Panc1 (cell line): ENCODE measurements at regions of chr12 and their contacts with region 1.

Region 1: GRCh38 chr12:128864516-128865186 is 11.4 kb downstream of the GLT1D1 start:
- DNase-seq: no peak
- ATAC-seq: no peak
- H3K4me3 ChIP-seq: no peak overlapping the region
- H3K27ac ChIP-seq: no peak overlapping the region
- H3K4me1 ChIP-seq: no peaks in the 10 kb centered on the region
- H3K27me3 ChIP-seq: no peaks in the 10 kb centered on the region
- CTCF ChIP-seq: no peak

Region 2: GRCh38 chr12:128817111-128818015 is 47.3 kb before region 1 on chr12:
- CTCF ChIA-PET with region 1: no interaction called
- POLR2A ChIA-PET with region 1: interaction called, 13 read pairs
- in situ Hi-C with region 1: no loop called
- intact Hi-C with region 1: no loop called
- DNase-seq: no peak
- ATAC-seq: peak; percentile 61; the same call in 1 of the 2 replicates
- H3K4me3 ChIP-seq: no peak overlapping the region
- H3K27ac ChIP-seq: no peak overlapping the region
- H3K4me1 ChIP-seq: peaks cover 21% of the 10 kb centered on the region
- H3K27me3 ChIP-seq: no peaks in the 10 kb centered on the region
- CTCF ChIP-seq: no peak

Region 3: GRCh38 chr12:128823916-128824839 is 40.5 kb before region 1 on chr12 and contains the start of gene SLC15A4:
- CTCF ChIA-PET with region 1: no interaction called
- POLR2A ChIA-PET with region 1: interaction called, 10 read pairs
- in situ Hi-C with region 1: no loop called
- intact Hi-C with region 1: no loop called
- DNase-seq: no peak
- ATAC-seq: peak; percentile 99
- H3K4me3 ChIP-seq: peak within 1 kb of the TSS; percentile 91 to 97
- H3K27ac ChIP-seq: peak within 1 kb of the TSS; percentile 95
- H3K4me1 ChIP-seq: peaks cover 13% of the 10 kb centered on the region
- H3K27me3 ChIP-seq: no peaks in the 10 kb centered on the region
- CTCF ChIP-seq: no peak
- total RNA-seq, gene SLC15A4: 29.1 TPM

Region 4: GRCh38 chr12:129961091-129961490 is 1096.4 kb after region 1 on chr12:
- CTCF ChIA-PET with region 1: interaction called, 10 read pairs
- POLR2A ChIA-PET with region 1: no interaction called
- in situ Hi-C with region 1: no loop called
- intact Hi-C with region 1: no loop called
- DNase-seq: peak; percentile 36
- ATAC-seq: no peak
- H3K4me3 ChIP-seq: no peak overlapping the region
- H3K27ac ChIP-seq: no peak overlapping the region
- H3K4me1 ChIP-seq: no peaks in the 10 kb centered on the region
- H3K27me3 ChIP-seq: no peaks in the 10 kb centered on the region
- CTCF ChIP-seq: no peak